ENCODE measurements at regions of chr2 and their contacts with region 1.

Region 1: DNA sequence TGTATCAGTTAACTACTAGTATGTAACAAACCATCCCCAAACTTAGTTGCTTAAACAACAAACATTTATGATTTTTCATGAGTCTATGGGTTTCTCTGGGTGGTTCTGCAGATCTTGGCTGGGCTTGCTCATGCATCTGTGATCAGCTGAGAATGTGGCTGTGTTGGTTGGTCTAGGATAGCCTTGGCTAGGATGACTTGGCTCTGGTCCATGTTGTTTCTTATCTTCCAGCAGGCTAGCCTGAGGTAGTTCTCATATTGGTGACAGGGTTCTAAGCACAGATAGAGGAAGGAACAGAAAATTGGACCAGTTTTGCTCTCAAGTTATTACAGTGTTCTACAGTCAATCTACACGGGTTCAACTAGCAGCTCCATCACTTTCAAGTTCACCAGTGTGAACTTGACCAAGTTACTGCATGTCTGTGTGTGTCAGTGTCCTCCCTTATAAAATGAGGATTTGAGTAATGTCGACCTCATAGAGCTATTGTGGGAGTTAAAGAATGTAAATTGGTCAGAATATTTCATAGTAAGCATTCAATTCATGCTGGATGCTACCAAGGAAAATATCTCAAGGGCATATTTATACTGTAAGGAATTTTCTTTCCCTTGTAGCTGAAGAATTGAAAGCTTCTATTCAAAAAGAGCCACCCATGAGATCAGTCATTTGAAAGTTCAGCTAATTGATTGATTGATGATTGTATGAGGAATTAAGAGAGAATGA is 65.3 kb downstream of the MYO3B start:
- DNase-seq: no peak
- ATAC-seq: no peak
- H3K4me3 ChIP-seq: no peak overlapping the region
- H3K27ac ChIP-seq: no peak overlapping the region
- H3K4me1 ChIP-seq: no peaks in the 10 kb centered on the region
- H3K27me3 ChIP-seq: no peaks in the 10 kb centered on the region

Region 2: GRCh38 chr2:170332676-170333402 is 89.6 kb after region 1 on chr2:
- intact Hi-C with region 1: no loop called
- DNase-seq: no peak
- ATAC-seq: no peak
- H3K4me3 ChIP-seq: no peak overlapping the region
- H3K27ac ChIP-seq: no peak overlapping the region
- H3K4me1 ChIP-seq: no peaks in the 10 kb centered on the region
- H3K27me3 ChIP-seq: no peaks in the 10 kb centered on the region

Region 3: GRCh38 chr2:170873035-170873692 is 629.9 kb after region 1 on chr2:
- intact Hi-C with region 1: loop called in 1 of 4 experiments (anchors 10 kb)
- DNase-seq: peak; percentile 68 to 85 (median 81)
- ATAC-seq: peak; percentile 86 to 88
- H3K4me3 ChIP-seq: peak overlapping the region; percentile 24
- H3K27ac ChIP-seq: no peak overlapping the region
- H3K4me1 ChIP-seq: no peaks in the 10 kb centered on the region
- H3K27me3 ChIP-seq: no peaks in the 10 kb centered on the region

Measured in right cardiac atrium (tissue), 5 donors.